Activated naive CD4-positive, alpha-beta T cell treated with anti-CD3 and anti-CD28 coated beads for 36 hours (primary cell): ENCODE measurements at regions of chr16 and their contacts with region 1.

Region 1: DNA sequence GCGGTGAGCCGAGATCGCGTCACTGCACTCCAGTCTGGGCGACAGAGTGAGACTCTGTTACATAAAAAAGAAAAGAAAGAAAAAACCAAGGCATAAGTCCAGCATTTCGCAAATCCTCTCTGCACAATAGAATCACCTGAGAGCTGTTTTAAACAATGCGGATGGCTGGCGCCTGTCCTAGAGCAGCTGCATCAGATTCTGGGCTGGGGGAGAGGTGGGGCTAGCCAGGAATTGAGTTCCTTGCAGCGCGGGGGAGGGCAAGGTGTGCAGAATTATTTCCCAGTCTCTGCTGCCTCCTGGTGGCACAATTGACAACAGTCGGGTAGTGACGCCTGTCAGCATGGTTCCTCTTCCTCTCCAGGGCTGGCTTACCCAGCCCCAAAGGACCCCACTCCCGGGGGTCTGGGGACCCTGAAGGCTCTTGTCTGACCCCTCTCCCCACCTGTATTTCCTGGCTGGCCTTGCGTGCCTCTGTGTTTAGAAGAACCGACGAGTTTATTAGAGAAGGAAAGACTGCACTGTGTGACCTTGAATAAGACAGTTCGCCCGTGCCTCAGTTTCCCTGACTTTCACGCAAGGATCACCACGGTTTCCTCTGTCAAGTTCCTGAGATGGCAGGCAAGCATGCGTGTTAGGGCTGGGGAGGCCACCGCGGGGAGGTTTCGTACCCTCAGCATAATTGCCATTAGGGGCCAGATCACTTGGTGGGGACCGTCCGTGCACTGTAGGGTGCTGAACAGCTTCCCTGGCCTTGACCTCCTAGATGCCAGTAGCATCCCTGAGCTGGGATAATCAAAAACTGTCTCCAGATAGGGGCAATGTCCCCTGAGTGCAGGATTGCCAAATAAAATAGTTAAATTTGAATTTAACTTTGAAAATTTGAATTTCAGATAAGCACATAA is 41.0 kb upstream of the PLCG2 start:
- DNase-seq: peak; percentile 97
- H3K4me3 Mint-ChIP-seq: peak overlapping the region; percentile 61
- H3K27ac Mint-ChIP-seq: peak overlapping the region; percentile 77
- H3K4me1 Mint-ChIP-seq: peaks cover 12% of the 10 kb centered on the region
- H3K27me3 Mint-ChIP-seq: no peaks in the 10 kb centered on the region

Region 2: GRCh38 chr16:80924372-80924978 is 813.7 kb before region 1 on chr16:
- CTCF ChIA-PET with region 1: no interaction called
- intact Hi-C with region 1: loop called (anchors 1 kb)
- DNase-seq: peak; percentile 75
- H3K4me3 Mint-ChIP-seq: no peak overlapping the region
- H3K27ac Mint-ChIP-seq: no peak overlapping the region
- H3K4me1 Mint-ChIP-seq: peaks cover 4% of the 10 kb centered on the region
- H3K27me3 Mint-ChIP-seq: peaks cover 22% of the 10 kb centered on the region

Region 3: GRCh38 chr16:81077076-81077940 is 660.8 kb before region 1 on chr16 and contains the start of gene C16orf46:
- CTCF ChIA-PET with region 1: no interaction called
- intact Hi-C with region 1: loop called (anchors 5 kb)
- DNase-seq: peak; percentile 99
- H3K4me3 Mint-ChIP-seq: no peak within 1 kb of the TSS
- H3K27ac Mint-ChIP-seq: no peak within 1 kb of the TSS
- H3K4me1 Mint-ChIP-seq: peaks cover 4% of the 10 kb centered on the region
- H3K27me3 Mint-ChIP-seq: no peaks in the 10 kb centered on the region
- total RNA-seq, gene C16orf46: 0.74 TPM in 1 of 2 experiments, not detected in the other

Region 4: DNA sequence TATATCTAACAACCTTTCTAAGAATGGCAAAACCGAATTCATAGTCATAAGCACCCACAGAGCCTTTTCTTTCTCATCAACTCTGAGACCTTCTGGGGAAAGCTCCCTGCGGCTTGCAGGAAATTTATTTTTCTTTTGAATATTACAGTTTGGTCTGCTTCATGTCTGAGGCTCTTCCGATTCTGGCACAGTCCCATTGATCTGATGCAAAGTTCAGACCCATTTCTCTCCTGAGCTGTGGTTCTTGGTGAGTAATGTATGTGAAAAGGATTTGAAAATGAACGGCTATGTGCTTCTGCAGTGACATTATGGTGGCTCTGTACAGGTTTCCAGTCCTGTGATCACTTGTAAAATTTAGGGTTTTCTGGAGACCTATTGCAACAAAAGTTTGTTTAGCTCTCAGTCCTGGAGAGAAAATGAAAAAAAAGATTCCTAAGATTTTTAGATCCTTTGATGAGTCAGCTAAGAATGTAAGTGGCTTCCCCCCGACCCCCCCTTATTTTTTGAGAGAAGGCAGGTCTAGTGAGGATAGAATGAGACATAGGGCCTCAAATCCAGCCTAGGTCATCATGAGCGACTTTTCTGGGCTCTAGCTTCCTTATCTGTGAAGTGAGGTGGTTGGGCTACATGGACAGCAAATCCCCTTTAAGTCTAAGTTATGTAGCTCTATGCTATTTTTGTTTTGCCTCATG is 418.8 kb before region 1 on chr16:
- CTCF ChIA-PET with region 1: no interaction called
- intact Hi-C with region 1: no loop called
- DNase-seq: no peak
- H3K4me3 Mint-ChIP-seq: no peak overlapping the region
- H3K27ac Mint-ChIP-seq: no peak overlapping the region
- H3K4me1 Mint-ChIP-seq: peaks cover 50% of the 10 kb centered on the region
- H3K27me3 Mint-ChIP-seq: no peaks in the 10 kb centered on the region

Region 5: GRCh38 chr16:81366316-81366932 is 371.7 kb before region 1 on chr16:
- CTCF ChIA-PET with region 1: interaction called, 6 read pairs
- intact Hi-C with region 1: loop called (anchors 1 kb)
- DNase-seq: peak; percentile 9
- H3K4me3 Mint-ChIP-seq: no peak overlapping the region
- H3K27ac Mint-ChIP-seq: no peak overlapping the region
- H3K4me1 Mint-ChIP-seq: no peaks in the 10 kb centered on the region
- H3K27me3 Mint-ChIP-seq: no peaks in the 10 kb centered on the region

Region 6: GRCh38 chr16:81723098-81723723 is 14.9 kb before region 1 on chr16:
- CTCF ChIA-PET with region 1: interaction called, 8 read pairs
- intact Hi-C with region 1: loop called (anchors 1 kb)
- DNase-seq: peak; percentile 53
- H3K4me3 Mint-ChIP-seq: no peak overlapping the region
- H3K27ac Mint-ChIP-seq: no peak overlapping the region
- H3K4me1 Mint-ChIP-seq: peaks cover 3% of the 10 kb centered on the region
- H3K27me3 Mint-ChIP-seq: no peaks in the 10 kb centered on the region